Mammary epithelial cell (primary cell): ENCODE measurements at regions of chr2 and their contacts with region 1.

Region 1: GRCh38 chr2:130372055-130372832 is 16.4 kb downstream of the PTPN18 start:
- DNase-seq: peak; percentile 76
- H3K4me3 ChIP-seq: peak overlapping the region; percentile 85 to 91 (median 86)
- H3K27ac ChIP-seq: peak overlapping the region; percentile 56
- H3K4me1 ChIP-seq: peaks cover 21% of the 10 kb centered on the region
- H3K27me3 ChIP-seq: no peaks in the 10 kb centered on the region
- CTCF ChIP-seq: peak; percentile 63 to 85

Region 2: GRCh38 chr2:130342533-130343275 is 29.5 kb before region 1 on chr2 and contains the start of gene IMP4:
- CTCF ChIA-PET with region 1: interaction called, 3 read pairs
- dilution Hi-C with region 1: no loop called
- in situ Hi-C with region 1: no loop called
- intact Hi-C with region 1: loop called (anchors 2 kb)
- DNase-seq: peak; percentile 99
- H3K4me3 ChIP-seq: peak within 1 kb of the TSS; percentile 75 to 89 (median 87)
- H3K27ac ChIP-seq: peak within 1 kb of the TSS; percentile 77
- H3K4me1 ChIP-seq: peaks cover 11% of the 10 kb centered on the region
- H3K27me3 ChIP-seq: no peaks in the 10 kb centered on the region
- CTCF ChIP-seq: peak in 1 of 2 donors; percentile 55
- total RNA-seq, gene IMP4: 81.6 to 83.9 TPM

Region 3: GRCh38 chr2:130391058-130391871 is 19.0 kb after region 1 on chr2:
- CTCF ChIA-PET with region 1: no interaction called
- dilution Hi-C with region 1: no loop called
- in situ Hi-C with region 1: no loop called
- intact Hi-C with region 1: loop called (anchors 2 kb)
- DNase-seq: peak; percentile 68
- H3K4me3 ChIP-seq: peak overlapping the region; percentile 62 to 69 (median 64)
- H3K27ac ChIP-seq: no peak overlapping the region
- H3K4me1 ChIP-seq: peaks cover 9% of the 10 kb centered on the region
- H3K27me3 ChIP-seq: no peaks in the 10 kb centered on the region
- CTCF ChIP-seq: no peak

Region 4: GRCh38 chr2:130930740-130931659 is 558.8 kb after region 1 on chr2:
- CTCF ChIA-PET with region 1: no interaction called
- dilution Hi-C with region 1: no loop called
- in situ Hi-C with region 1: no loop called
- intact Hi-C with region 1: no loop called
- DNase-seq: no peak
- H3K4me3 ChIP-seq: no peak overlapping the region
- H3K27ac ChIP-seq: no peak overlapping the region
- H3K4me1 ChIP-seq: no peaks in the 10 kb centered on the region
- H3K27me3 ChIP-seq: no peaks in the 10 kb centered on the region
- CTCF ChIP-seq: no peak